ENCODE measurements at regions of chr1 and their contacts with region 1.

Region 1: GRCh38 chr1:229986737-229987337 is 80.2 kb upstream of the GALNT2 start:
- DNase-seq: no peak
- H3K4me3 ChIP-seq: no peak overlapping the region
- CTCF ChIP-seq: no peak
- POLR2A ChIP-seq: no peak

Region 2: DNA sequence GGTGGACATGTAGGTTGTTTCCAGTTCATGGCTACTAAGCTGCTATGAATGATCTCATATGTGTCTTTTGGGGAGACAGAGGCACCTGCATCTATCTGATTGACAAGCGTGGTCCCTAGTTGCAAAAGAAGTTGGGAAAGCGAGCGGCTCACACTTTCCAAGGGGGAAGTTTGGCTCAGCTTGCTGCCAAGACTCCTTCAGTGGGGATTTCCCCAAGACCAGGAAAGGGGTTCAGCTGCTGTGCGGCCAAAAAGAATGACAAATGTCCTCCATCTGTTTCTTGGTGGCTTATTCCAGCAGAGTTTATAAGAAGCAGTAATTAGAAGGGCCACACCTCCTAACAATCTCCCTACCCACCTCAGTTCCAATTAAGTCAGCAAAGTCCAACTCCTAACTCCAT is 48.3 kb before region 1 on chr1:
- intact Hi-C with region 1: loop called (anchors 2 kb)
- DNase-seq: no peak
- H3K4me3 ChIP-seq: no peak overlapping the region
- CTCF ChIP-seq: no peak
- POLR2A ChIP-seq: no peak

Region 3: GRCh38 chr1:231192620-231193163 is 1205.9 kb after region 1 on chr1:
- intact Hi-C with region 1: no loop called
- DNase-seq: no peak
- H3K4me3 ChIP-seq: no peak overlapping the region
- CTCF ChIP-seq: no peak
- POLR2A ChIP-seq: no peak

Region 4: DNA sequence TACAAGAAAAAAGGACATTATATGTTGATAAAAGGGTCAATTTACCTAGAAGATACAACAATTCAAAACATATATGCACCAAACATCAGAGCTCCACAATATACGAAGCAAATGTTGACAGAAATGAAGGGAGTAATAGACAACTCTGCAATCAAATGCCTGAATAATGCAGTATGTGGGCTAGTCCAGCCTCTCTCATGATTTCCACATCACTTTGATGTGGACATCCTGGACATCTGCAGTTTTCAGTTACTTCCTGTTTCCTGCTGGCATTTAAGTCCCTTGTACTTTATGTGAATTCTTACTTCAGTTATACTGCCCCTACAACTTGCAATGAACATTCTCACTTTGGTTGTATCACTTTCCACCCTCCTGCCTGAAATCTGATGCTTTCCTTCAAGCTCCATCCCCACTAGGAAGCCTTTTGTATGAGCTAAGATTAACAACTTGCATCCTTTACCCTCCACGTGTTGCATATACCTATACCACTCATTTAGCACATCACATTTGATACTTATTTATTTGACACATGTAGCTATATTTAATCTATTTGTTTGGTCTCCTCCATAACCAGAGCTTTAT is 1676.5 kb after region 1 on chr1:
- intact Hi-C with region 1: no loop called
- DNase-seq: no peak
- H3K4me3 ChIP-seq: no peak overlapping the region
- CTCF ChIP-seq: no peak
- POLR2A ChIP-seq: no peak